ENCODE measurements at regions of chr1 and their contacts with region 1.

Region 1: DNA sequence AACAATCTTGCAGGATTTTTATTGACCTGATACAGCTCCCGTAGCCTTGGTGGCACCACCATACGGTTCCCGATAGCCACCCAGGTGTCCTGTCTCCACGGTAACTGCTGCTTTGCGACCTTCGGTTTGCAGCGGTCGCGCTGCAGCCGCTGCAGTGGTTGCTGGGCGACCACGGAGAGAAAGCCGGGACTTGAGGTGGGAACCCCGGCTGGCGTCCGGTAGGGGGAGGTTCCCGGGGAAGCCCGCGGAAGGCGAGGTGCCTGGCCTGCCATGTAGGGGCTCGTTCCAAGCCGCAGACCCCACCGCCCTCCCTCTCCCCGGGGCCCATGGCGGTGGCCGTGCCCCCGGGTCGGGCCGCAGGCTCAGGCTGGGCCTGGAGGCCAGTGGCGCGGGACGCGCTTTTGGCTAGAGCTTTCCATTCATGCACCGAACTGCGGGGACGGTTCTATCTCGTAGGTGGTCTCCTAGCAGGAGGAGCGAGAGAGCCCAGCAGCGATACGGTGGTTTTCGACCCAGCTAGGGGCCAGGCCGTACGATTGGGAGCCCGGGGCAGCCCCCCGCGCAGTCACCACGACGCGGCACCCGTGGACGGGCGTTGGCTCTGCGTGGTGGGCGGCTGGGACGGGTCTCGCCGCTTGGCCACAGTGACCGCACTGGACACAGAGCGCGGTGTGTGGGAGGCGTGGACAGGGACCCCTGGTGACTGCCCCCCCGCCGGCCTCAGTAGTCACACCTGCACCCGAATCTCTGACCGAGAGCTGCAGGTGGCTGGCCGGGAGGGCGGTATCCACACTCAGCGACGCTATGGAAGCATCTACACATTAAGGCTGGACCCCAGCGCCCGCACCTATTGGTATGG is at the start of gene KLHDC9:
- DNase-seq: no peak
- H3K4me3 ChIP-seq: no peak within 1 kb of the TSS
- H3K4me1 ChIP-seq: no peaks in the 10 kb centered on the region
- H3K27me3 ChIP-seq: no peaks in the 10 kb centered on the region

Region 2: DNA sequence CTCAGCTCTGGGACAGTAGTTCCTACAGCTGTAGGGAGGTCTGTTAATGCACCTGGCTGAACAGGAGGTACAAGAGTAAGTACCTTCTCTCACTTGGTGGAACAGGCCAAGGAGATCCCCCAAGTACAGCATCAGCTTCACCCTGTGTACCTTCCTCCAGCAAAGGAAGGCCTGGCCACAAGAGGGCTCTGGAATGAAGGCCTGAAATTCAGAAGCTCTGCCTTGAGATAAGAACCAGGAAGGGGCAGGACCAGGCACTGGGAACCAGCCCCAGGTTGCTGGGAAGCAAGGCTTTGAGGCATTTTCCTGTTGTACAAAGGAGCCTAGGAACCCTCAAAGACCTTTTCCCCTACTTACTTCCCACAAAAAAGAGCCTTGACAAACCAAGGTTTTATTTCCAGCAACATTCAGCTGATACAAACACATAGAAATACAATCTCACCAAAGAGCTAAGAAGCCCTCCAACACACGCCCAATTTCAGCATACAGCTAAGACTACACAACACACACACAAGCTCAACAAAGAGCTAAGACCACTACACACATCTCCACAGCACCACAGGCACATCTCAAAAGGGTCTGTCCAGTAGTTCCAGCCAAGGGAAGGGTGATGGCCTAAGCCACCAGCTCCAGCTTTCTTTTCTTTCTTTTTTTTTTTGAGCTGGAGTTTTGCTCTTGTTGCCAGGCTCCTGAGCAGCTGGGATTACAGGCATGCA is 101.0 kb before region 1 on chr1:
- in situ Hi-C with region 1: loop called (anchors 10 kb)
- DNase-seq: peak in 1 of 2 experiments; percentile 58
- H3K4me3 ChIP-seq: no peak overlapping the region
- H3K4me1 ChIP-seq: no peaks in the 10 kb centered on the region
- H3K27me3 ChIP-seq: no peaks in the 10 kb centered on the region

Region 3: GRCh38 chr1:161165742-161166668 is 67.6 kb after region 1 on chr1 and contains the start of gene PPOX:
- in situ Hi-C with region 1: no loop called
- DNase-seq: peak; percentile 97 to 99
- H3K4me3 ChIP-seq: peak within 1 kb of the TSS; percentile 53
- H3K4me1 ChIP-seq: peaks cover 7% of the 10 kb centered on the region
- H3K27me3 ChIP-seq: no peaks in the 10 kb centered on the region

Region 4: DNA sequence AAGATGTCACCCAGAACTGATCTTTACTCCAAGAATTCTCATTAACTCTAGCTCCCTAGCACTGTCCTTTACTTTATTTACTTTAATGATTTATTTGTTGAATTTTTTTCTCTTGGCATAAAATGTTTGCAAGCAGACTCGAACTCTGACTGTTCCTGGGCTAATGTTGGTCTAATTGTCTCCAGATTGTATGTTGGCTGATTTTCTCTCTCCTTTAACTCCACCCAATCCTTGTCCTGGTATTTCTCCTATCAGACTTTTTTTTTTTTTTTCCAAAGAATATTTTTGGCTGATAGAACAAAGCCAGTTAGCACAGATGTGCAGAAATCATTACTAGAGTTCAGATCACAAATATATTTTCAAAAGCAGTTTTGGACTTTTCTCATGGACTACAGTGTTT is 750.2 kb after region 1 on chr1:
- in situ Hi-C with region 1: no loop called
- DNase-seq: no peak
- H3K4me3 ChIP-seq: no peak overlapping the region
- H3K4me1 ChIP-seq: peaks cover 6% of the 10 kb centered on the region
- H3K27me3 ChIP-seq: no peaks in the 10 kb centered on the region

Measured in HAP-1 (cell line).